ENCODE measurements at regions of chr9 and their contacts with region 1.

Region 1: GRCh38 chr9:112361601-112362000 is 18.3 kb upstream of the HSDL2 start:
- DNase-seq: no peak
- ATAC-seq: no peak

Region 2: GRCh38 chr9:112086627-112087026 is 275.0 kb before region 1 on chr9:
- intact Hi-C with region 1: loop called (anchors 2 kb)
- DNase-seq: no peak
- ATAC-seq: no peak

Region 3: GRCh38 chr9:112404508-112404932 is 42.9 kb after region 1 on chr9:
- intact Hi-C with region 1: no loop called
- DNase-seq: no peak
- ATAC-seq: no peak